Caco-2 (cell line): ENCODE measurements at regions of chr11 and their contacts with region 1.

Region 1: GRCh38 chr11:66069715-66070603 is at the start of gene PACS1:
- DNase-seq: peak in 1 of 2 experiments; percentile 78
- H3K4me3 ChIP-seq: peak within 1 kb of the TSS; percentile 83
- H3K4me3 Mint-ChIP-seq: peak within 1 kb of the TSS; percentile 96
- H3K27ac Mint-ChIP-seq: peak within 1 kb of the TSS; percentile 91
- H3K4me1 ChIP-seq: peaks cover 15% of the 10 kb centered on the region; the same call in 1 of the 2 replicates
- H3K4me1 Mint-ChIP-seq: peaks cover 17% of the 10 kb centered on the region
- H3K27me3 ChIP-seq: no peaks in the 10 kb centered on the region
- H3K27me3 Mint-ChIP-seq: no peaks in the 10 kb centered on the region
- CTCF ChIP-seq: no peak
- total RNA-seq, gene PACS1: 82.2 and 95.2 TPM in 2 replicates

Region 2: GRCh38 chr11:66026017-66026529 is 43.9 kb before region 1 on chr11 and contains the start of gene CATSPER1:
- CTCF ChIA-PET with region 1: no interaction called
- POLR2A ChIA-PET with region 1: no interaction called
- intact Hi-C with region 1: no loop called
- DNase-seq: no peak
- H3K4me3 ChIP-seq: no peak within 1 kb of the TSS
- H3K4me3 Mint-ChIP-seq: no peak within 1 kb of the TSS
- H3K27ac Mint-ChIP-seq: no peak within 1 kb of the TSS
- H3K4me1 ChIP-seq: no peaks in the 10 kb centered on the region
- H3K4me1 Mint-ChIP-seq: no peaks in the 10 kb centered on the region
- H3K27me3 ChIP-seq: no peaks in the 10 kb centered on the region
- H3K27me3 Mint-ChIP-seq: peaks cover 3% of the 10 kb centered on the region
- CTCF ChIP-seq: no peak
- total RNA-seq, gene CATSPER1: not detected in 2 replicates

Region 3: DNA sequence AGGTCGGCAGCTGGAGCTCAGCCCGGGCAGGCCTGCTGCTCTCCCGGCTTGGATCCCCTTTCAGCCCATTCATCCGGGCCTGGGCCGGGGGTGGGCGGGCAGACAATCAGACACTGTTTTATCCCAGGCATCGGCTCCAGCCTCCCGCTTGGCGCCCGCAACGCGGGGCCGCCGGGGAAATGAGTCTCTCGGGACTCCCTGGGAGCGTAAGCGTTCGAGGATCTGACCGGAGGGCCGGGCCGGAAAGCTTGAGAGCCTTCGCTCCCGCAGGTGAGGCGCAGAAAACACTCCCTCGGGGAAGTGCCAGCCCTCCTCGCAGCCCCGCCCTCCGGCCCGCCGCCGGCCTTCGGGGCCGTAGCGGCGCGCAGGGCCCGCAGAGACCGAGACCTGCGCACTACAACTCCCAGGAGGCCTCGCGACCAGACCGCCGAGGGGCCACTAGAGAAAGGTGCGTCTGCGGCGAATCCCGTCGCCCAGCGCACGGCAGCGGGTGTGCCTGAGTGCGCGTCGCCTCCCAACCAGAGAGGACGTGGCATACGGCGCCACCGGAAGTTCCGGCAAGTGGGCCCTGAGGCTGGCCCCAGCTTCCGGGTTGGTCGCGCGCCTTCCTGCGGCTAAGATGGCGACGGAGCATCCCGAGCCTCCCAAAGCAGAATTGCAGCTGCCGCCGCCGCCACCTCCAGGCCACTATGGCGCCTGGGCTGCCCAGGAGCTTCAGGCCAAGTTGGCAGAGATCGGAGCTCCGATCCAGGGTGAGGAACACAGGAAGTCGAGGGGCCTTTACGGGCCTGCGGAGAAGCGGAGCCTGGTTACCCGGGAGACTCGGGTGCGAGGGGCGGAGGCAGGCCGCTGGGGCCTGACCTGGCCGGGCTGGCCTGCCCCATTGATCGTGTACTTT is 17.9 kb before region 1 on chr11 and contains the start of gene SF3B2:
- CTCF ChIA-PET with region 1: interaction called, 4 read pairs
- POLR2A ChIA-PET with region 1: interaction called, 6 read pairs
- intact Hi-C with region 1: loop called (anchors 2 kb)
- DNase-seq: peak; percentile 99
- H3K4me3 ChIP-seq: peak within 1 kb of the TSS; percentile 71
- H3K4me3 Mint-ChIP-seq: peak within 1 kb of the TSS; percentile 91
- H3K27ac Mint-ChIP-seq: peak within 1 kb of the TSS; percentile 96
- H3K4me1 ChIP-seq: peaks cover 9% of the 10 kb centered on the region
- H3K4me1 Mint-ChIP-seq: peaks cover 14% of the 10 kb centered on the region
- H3K27me3 ChIP-seq: no peaks in the 10 kb centered on the region
- H3K27me3 Mint-ChIP-seq: no peaks in the 10 kb centered on the region
- CTCF ChIP-seq: peak in 1 of 2 experiments; percentile 0
- total RNA-seq, gene SF3B2: 224 and 225 TPM in 2 replicates

Region 4: DNA sequence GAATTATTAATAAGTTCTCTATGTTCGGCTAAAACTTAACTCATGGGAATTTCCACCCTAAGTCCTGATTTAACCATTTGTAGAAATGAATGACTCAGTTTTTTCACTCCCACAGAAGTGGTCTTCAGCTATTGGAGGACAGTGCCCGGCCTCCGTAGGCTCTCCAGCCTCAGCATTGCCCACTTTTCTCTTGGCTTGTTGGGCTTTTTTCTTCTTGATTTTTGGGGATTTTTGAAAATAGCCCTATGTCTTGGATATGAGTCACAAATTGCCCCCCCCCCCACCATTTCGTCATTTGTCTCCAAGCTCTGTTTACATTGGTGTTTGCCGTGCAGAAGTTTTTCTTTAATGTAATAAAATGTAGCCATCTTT is 66.8 kb after region 1 on chr11:
- CTCF ChIA-PET with region 1: interaction called, 5 read pairs
- POLR2A ChIA-PET with region 1: no interaction called
- intact Hi-C with region 1: loop called (anchors 1 kb)
- DNase-seq: no peak
- H3K4me3 ChIP-seq: no peak overlapping the region
- H3K4me3 Mint-ChIP-seq: peak overlapping the region; percentile 11
- H3K27ac Mint-ChIP-seq: peak overlapping the region; percentile 85
- H3K4me1 ChIP-seq: peaks cover 34% of the 10 kb centered on the region
- H3K4me1 Mint-ChIP-seq: peaks cover 30% of the 10 kb centered on the region
- H3K27me3 ChIP-seq: no peaks in the 10 kb centered on the region
- H3K27me3 Mint-ChIP-seq: no peaks in the 10 kb centered on the region
- CTCF ChIP-seq: no peak